Caco-2 (cell line): ENCODE measurements at regions of chr2 and their contacts with region 1.

Region 1: DNA sequence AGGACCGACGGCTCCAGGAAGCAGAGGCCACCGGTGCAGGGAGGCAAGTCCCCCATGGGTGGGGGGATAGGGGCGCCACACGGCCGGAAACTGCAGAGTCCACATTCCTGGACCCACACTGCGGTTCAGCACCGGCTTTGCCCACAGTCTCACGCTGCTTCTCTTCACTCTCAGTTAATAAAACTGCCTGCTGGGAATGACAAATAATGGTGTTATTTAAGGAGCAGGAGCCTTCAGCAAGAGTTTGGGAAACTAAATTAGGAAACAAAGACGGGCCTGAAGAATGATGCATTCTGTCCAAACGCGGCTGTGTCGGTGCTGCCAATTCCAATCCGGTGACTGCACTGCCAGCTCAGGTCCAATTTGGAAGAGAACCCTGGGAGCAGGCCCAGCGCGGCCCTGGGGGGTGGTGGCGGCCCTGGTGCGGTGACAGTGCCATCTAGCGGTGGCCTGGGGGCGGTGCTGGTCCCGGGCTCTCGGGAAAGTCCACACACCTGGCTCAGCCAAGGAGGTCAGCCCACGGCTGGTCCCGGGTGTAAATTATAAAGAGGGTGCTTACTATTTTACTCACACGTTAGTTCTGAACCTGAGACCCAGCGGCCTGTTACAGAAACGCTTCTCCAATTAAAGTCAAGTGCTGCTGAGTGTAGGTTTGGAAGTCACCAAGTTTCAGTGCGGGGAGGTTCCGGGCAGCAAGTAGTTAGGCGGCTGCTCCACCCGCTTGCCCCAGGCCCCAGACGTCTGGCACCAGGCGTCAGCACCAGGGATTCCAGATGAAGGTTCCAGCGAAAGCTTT is 73.1 kb upstream of the PXDN start:
- DNase-seq: peak; percentile 62 to 80
- H3K4me3 ChIP-seq: no peak overlapping the region
- H3K4me3 Mint-ChIP-seq: no peak overlapping the region
- H3K27ac Mint-ChIP-seq: no peak overlapping the region
- H3K4me1 ChIP-seq: no peaks in the 10 kb centered on the region; the same call in 1 of the 2 replicates
- H3K4me1 Mint-ChIP-seq: no peaks in the 10 kb centered on the region
- H3K27me3 ChIP-seq: no peaks in the 10 kb centered on the region
- H3K27me3 Mint-ChIP-seq: peaks cover 14% of the 10 kb centered on the region
- CTCF ChIP-seq: peak; percentile 93 to 95

Region 2: DNA sequence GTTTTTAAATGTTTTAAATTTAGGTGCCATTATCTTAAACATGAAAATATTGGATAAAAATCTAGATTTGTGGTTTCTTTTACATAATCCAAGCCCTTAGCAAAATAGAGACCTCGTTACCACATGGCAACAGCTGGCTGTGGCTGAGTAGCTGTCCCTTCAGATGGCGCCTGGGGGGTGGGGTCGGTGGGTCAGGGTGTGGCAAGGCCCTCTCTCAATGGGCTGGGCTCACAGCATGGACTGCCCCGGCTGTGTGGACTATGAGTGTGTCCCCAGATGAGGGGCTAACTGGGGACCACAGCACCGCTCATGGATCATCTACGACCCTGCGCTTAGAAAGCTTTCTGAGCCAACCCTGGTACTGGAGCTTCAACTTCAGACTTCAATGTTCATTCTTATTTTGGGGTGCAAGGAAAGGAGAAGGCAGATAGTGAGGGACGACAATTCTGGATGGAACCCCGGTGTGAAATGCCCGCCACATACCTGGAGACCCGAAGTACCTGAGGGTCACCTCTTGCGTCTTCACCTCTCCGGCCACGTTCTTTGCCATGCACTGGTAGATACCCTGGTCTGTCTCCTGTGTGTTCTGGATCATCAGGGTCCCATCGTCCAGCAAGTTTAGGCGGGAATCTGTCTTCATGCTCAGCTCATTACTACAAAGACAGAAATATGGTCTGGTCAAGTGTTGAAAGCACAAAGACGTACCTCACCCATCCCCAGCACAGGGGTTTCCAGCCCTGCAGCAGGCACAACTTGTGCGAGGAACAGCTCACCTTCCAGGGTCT is 144.1 kb before region 1 on chr2:
- CTCF ChIA-PET with region 1: no interaction called
- POLR2A ChIA-PET with region 1: no interaction called
- intact Hi-C with region 1: loop called (anchors 5 kb)
- DNase-seq: no peak
- H3K4me3 ChIP-seq: no peak overlapping the region
- H3K4me3 Mint-ChIP-seq: no peak overlapping the region
- H3K27ac Mint-ChIP-seq: no peak overlapping the region
- H3K4me1 ChIP-seq: no peaks in the 10 kb centered on the region
- H3K4me1 Mint-ChIP-seq: no peaks in the 10 kb centered on the region
- H3K27me3 ChIP-seq: no peaks in the 10 kb centered on the region
- H3K27me3 Mint-ChIP-seq: peaks cover 9% of the 10 kb centered on the region
- CTCF ChIP-seq: no peak